PC-9 (cell line): ENCODE measurements at regions of chr1 and their contacts with region 1.

Region 1: DNA sequence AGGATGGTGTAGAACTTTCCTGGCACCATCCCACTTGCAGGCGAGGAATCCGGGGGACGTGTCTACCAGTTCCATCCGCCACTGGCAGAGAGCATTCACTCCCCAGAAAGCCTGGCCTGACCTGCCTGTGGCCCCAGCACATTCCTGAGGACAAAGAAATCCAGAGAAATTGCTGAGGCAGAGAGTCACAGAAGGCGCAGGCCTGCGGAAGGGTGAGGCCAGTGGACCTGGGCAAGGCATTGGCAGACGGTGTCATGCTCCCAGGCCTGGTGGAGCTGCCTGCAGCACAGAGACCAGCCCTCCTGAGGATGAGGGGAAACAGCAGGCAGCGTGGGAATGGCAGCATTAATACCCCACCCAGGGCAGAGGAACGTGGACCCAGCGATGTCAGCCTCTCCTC is 81.2 kb upstream of the F3 start:
- DNase-seq: peak; percentile 95 to 99
- H3K4me3 ChIP-seq: peak overlapping the region; percentile 41; the same call in 1 of the 2 replicates
- H3K27ac ChIP-seq: peak overlapping the region; percentile 99
- H3K4me1 ChIP-seq: peaks cover 72% of the 10 kb centered on the region
- H3K27me3 ChIP-seq: no peaks in the 10 kb centered on the region
- CTCF ChIP-seq: no peak

Region 2: GRCh38 chr1:94527447-94528031 is 95.2 kb before region 1 on chr1:
- CTCF ChIA-PET with region 1: interaction called, 3 read pairs
- POLR2A ChIA-PET with region 1: interaction called, 16 read pairs
- intact Hi-C with region 1: loop called (anchors 1 kb)
- DNase-seq: peak; percentile 62 to 99
- H3K4me3 ChIP-seq: no peak overlapping the region
- H3K27ac ChIP-seq: peak overlapping the region; percentile 71
- H3K4me1 ChIP-seq: peaks cover 60% of the 10 kb centered on the region
- H3K27me3 ChIP-seq: no peaks in the 10 kb centered on the region
- CTCF ChIP-seq: 0 out of 2 replicates have a peak, but pooled peaks have one; percentile 40

Region 3: GRCh38 chr1:94553323-94553730 is 69.4 kb before region 1 on chr1:
- CTCF ChIA-PET with region 1: no interaction called
- POLR2A ChIA-PET with region 1: interaction called, 10 read pairs
- intact Hi-C with region 1: no loop called
- DNase-seq: no peak
- H3K4me3 ChIP-seq: no peak overlapping the region
- H3K27ac ChIP-seq: no peak overlapping the region
- H3K4me1 ChIP-seq: peaks cover 13% of the 10 kb centered on the region
- H3K27me3 ChIP-seq: no peaks in the 10 kb centered on the region
- CTCF ChIP-seq: no peak

Region 4: GRCh38 chr1:94579876-94580294 is 42.9 kb before region 1 on chr1:
- CTCF ChIA-PET with region 1: no interaction called
- POLR2A ChIA-PET with region 1: interaction called, 5 read pairs
- intact Hi-C with region 1: loop called (anchors 1 kb)
- DNase-seq: peak; percentile 88 to 98
- H3K4me3 ChIP-seq: no peak overlapping the region
- H3K27ac ChIP-seq: peak overlapping the region; percentile 66
- H3K4me1 ChIP-seq: peaks cover 35% of the 10 kb centered on the region
- H3K27me3 ChIP-seq: no peaks in the 10 kb centered on the region
- CTCF ChIP-seq: no peak

Region 5: GRCh38 chr1:94648225-94649007 is 25.7 kb after region 1 on chr1:
- CTCF ChIA-PET with region 1: no interaction called
- POLR2A ChIA-PET with region 1: interaction called, 10 read pairs
- intact Hi-C with region 1: loop called (anchors 1 kb)
- DNase-seq: peak; percentile 79 to 100
- H3K4me3 ChIP-seq: peak overlapping the region; percentile 32; the same call in 1 of the 2 replicates
- H3K27ac ChIP-seq: peak overlapping the region; percentile 97
- H3K4me1 ChIP-seq: peaks cover 84% of the 10 kb centered on the region
- H3K27me3 ChIP-seq: no peaks in the 10 kb centered on the region
- CTCF ChIP-seq: no peak

Region 6: GRCh38 chr1:94727846-94728715 is 105.3 kb after region 1 on chr1:
- CTCF ChIA-PET with region 1: no interaction called
- POLR2A ChIA-PET with region 1: interaction called, 6 read pairs
- intact Hi-C with region 1: loop called (anchors 1 kb)
- DNase-seq: peak; percentile 83 to 100
- H3K4me3 ChIP-seq: peak overlapping the region; percentile 1; the same call in 1 of the 2 replicates
- H3K27ac ChIP-seq: peak overlapping the region; percentile 85
- H3K4me1 ChIP-seq: peaks cover 44% of the 10 kb centered on the region
- H3K27me3 ChIP-seq: no peaks in the 10 kb centered on the region
- CTCF ChIP-seq: no peak

Region 7: DNA sequence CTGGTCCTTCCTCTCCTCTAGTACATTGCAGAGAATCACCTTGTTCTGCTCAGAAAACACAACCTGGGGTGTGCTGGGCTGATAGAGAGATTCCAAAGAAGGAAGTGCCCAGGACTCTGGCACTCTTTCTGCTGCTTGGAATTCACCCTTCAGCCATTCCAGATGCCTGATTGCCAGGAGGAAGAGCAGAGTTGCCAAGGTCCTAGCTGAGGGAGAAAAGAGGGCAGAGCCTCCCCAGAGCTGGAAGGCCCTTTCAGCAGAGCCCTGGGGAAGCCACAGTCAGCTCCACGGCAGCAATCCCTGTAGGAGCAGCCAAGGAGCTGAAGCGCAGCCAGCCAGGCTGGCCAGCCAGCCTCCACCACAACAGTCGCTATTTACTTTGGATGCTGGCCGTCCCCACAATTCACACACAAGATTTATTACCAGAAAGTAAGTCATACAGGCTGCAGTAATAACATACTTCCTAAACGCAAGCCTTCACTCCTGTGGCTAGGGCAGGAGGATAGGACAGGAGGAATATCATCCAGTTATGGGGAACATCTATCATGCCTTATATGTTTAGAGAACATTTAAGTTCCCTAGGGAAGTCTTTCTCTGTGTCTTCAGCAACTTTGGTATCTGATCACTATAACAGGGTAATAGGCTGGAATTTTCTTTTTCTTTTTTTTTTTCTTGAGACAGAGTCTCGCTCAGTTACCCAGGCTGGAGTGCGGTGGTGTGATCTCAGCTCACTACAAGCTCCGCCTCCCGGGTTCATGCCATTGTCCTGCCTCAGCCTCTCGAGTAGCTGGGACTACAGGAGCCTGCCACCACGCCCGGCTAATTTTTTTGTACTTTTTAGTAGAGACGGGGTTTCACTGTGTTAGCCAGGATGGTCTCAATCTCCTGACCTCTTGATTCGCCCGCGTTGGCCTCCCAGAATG is 160.8 kb after region 1 on chr1:
- CTCF ChIA-PET with region 1: no interaction called
- POLR2A ChIA-PET with region 1: interaction called, 4 read pairs
- intact Hi-C with region 1: loop called (anchors 1 kb)
- DNase-seq: peak; percentile 87 to 94
- H3K4me3 ChIP-seq: peak overlapping the region; percentile 10; the same call in 1 of the 2 replicates
- H3K27ac ChIP-seq: peak overlapping the region; percentile 91
- H3K4me1 ChIP-seq: peaks cover 36% of the 10 kb centered on the region
- H3K27me3 ChIP-seq: no peaks in the 10 kb centered on the region
- CTCF ChIP-seq: no peak